ENCODE measurements at regions of chr9 and their contacts with region 1.

Region 1: GRCh38 chr9:69759421-69760277 is at the start of gene PTAR1:
- DNase-seq: peak; percentile 90
- H3K4me3 ChIP-seq: peak within 1 kb of the TSS; percentile 34 to 95 (median 91)
- H3K27ac ChIP-seq: peak within 1 kb of the TSS; percentile 64
- H3K4me1 ChIP-seq: peaks cover 15% of the 10 kb centered on the region
- H3K27me3 ChIP-seq: no peaks in the 10 kb centered on the region
- CTCF ChIP-seq: no peak
- POLR2A ChIP-seq: peak; percentile 85
- total RNA-seq, gene PTAR1: 41.5 and 46.8 TPM in 2 replicates

Region 2: DNA sequence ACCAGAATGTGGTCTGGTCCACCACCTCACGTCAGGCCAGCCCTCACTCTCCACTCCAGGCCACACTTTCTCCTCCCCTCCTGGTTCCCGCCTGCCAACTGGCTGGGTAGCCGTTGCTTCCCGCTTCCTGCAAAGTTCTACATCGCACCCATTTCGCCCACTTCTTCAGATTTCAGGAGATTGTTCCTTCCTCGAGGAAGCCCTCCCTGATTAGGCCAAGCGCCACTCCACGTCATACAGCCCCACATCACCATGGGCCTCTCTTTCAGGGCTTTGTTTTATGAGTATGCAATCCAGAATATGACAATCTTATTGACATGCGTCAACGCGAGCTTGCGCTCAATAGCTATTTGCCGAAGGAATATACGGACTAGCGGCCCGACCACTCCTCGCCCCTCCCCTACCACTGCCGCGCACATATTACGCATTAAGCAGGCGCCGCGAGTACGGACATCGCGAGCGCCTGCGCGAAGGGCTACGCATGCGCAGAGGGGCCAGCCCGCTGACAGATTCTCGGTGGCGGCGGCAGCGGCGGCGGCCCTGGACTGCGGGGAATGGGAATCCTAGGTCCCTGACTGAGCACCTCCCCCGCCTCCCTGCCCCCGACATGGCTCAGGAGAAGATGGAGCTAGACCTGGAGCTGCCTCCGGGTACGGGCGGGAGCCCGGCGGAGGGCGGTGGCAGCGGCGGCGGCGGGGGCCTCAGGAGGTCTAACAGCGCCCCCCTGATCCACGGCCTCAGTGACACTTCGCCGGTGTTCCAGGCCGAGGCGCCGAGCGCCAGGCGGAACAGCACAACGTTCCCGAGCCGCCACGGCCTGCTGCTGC is 979.9 kb before region 1 on chr9:
- CTCF ChIA-PET with region 1: no interaction called
- POLR2A ChIA-PET with region 1: no interaction called
- dilution Hi-C with region 1: no loop called
- intact Hi-C with region 1: loop called (anchors 10 kb)
- DNase-seq: peak; percentile 96
- H3K4me3 ChIP-seq: peak overlapping the region; percentile 52 to 71 (median 62)
- H3K27ac ChIP-seq: peak overlapping the region; percentile 87
- H3K4me1 ChIP-seq: peaks cover 26% of the 10 kb centered on the region
- H3K27me3 ChIP-seq: peaks cover 5% of the 10 kb centered on the region in 2 experiments
- CTCF ChIP-seq: peak; percentile 27 to 49
- POLR2A ChIP-seq: peak; percentile 54

Region 3: GRCh38 chr9:69131682-69132081 is 628.0 kb before region 1 on chr9:
- CTCF ChIA-PET with region 1: no interaction called
- POLR2A ChIA-PET with region 1: no interaction called
- dilution Hi-C with region 1: no loop called
- intact Hi-C with region 1: no loop called
- DNase-seq: peak; percentile 53
- H3K4me3 ChIP-seq: no peak overlapping the region
- H3K27ac ChIP-seq: peak overlapping the region; percentile 16
- H3K4me1 ChIP-seq: peaks cover 29% of the 10 kb centered on the region
- H3K27me3 ChIP-seq: no peaks in the 10 kb centered on the region
- CTCF ChIP-seq: no peak
- POLR2A ChIP-seq: no peak

Region 4: DNA sequence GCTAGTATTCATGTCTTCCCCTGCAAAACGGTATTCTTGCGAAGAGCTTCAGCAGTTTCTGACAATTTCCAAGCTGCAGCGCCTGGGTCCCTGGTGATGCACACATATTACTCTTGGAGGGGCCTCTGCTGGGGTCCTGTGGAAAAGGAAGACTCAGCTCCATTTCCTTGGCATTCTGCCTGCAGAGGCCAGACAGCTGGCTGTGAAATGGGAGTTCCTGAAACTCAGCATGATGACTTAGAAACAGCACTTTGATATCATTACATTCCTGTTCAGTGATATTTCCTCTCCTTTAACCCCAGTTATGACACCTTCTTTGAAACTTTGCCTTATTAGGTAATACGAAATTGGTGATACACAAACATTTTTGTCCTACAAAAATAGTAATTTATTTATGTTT is 186.0 kb before region 1 on chr9:
- CTCF ChIA-PET with region 1: no interaction called
- POLR2A ChIA-PET with region 1: no interaction called
- dilution Hi-C with region 1: no loop called
- intact Hi-C with region 1: loop called (anchors 5 kb)
- DNase-seq: peak; percentile 85
- H3K4me3 ChIP-seq: no peak overlapping the region
- H3K27ac ChIP-seq: peak overlapping the region; percentile 82
- H3K4me1 ChIP-seq: peaks cover 43% of the 10 kb centered on the region
- H3K27me3 ChIP-seq: no peaks in the 10 kb centered on the region
- CTCF ChIP-seq: no peak
- POLR2A ChIP-seq: no peak

Region 5: DNA sequence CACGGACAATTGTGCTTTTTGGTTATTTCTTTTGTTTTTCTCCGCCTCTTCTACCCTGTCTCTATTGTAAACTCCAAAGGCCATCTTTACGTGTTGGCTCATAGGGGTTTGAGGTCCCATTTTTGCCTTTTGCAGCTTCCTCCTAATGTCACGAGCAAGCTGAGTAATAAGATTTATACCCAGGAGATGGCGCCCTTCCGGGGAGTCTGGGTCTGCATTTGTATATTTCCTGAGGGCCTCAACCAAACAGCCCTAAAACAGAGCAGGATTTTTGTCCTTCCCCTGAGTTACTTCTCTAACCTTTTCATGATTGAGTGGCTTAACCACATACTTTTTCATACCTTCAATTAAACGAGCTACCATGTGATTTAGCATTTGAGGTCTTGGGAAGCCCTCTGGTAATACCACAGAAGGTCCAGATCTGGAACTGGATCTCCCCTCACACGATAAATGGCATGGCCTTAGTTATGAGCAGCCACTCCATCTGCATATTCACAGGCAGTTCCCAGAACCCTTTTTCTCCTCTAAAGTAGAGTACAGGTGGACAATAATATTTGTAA is 49.7 kb after region 1 on chr9:
- CTCF ChIA-PET with region 1: no interaction called
- POLR2A ChIA-PET with region 1: no interaction called
- dilution Hi-C with region 1: no loop called
- intact Hi-C with region 1: no loop called
- DNase-seq: peak; percentile 36
- H3K4me3 ChIP-seq: no peak overlapping the region
- H3K27ac ChIP-seq: no peak overlapping the region
- H3K4me1 ChIP-seq: no peaks in the 10 kb centered on the region
- H3K27me3 ChIP-seq: peaks cover 41 to 46% of the 10 kb centered on the region in 2 experiments
- CTCF ChIP-seq: peak; percentile 33 to 35
- POLR2A ChIP-seq: no peak

Region 6: GRCh38 chr9:69877854-69878514 is 118.3 kb after region 1 on chr9:
- CTCF ChIA-PET with region 1: no interaction called
- POLR2A ChIA-PET with region 1: no interaction called
- dilution Hi-C with region 1: no loop called
- intact Hi-C with region 1: loop called (anchors 5 kb)
- DNase-seq: peak; percentile 53
- H3K4me3 ChIP-seq: no peak overlapping the region
- H3K27ac ChIP-seq: no peak overlapping the region
- H3K4me1 ChIP-seq: peaks cover 14% of the 10 kb centered on the region
- H3K27me3 ChIP-seq: peaks cover 3 to 9% of the 10 kb centered on the region in 2 experiments
- CTCF ChIP-seq: peak; percentile 27 to 30
- POLR2A ChIP-seq: no peak

Region 7: DNA sequence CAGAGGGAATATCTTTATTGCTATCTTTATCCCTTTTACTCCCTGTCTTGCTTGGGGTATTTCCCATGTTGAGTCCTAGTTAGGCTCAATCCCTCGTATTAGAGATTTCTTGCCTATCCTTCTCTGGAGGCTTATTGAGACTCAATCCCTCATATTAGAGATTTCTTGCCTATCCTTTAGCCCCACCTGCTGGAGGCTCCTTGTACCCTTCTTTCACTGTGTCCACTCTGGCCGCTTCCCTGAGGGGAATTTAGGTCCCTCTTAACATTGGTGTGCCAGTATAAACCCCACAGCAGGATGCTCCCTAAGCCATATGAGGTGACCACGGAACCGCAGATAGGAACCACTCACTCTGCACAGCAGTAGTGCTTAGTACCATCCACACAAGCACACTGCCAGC is 173.3 kb after region 1 on chr9:
- CTCF ChIA-PET with region 1: interaction called, 3 read pairs
- POLR2A ChIA-PET with region 1: no interaction called
- dilution Hi-C with region 1: no loop called
- intact Hi-C with region 1: loop called (anchors 5 kb)
- DNase-seq: peak; percentile 44
- H3K4me3 ChIP-seq: no peak overlapping the region
- H3K27ac ChIP-seq: no peak overlapping the region
- H3K4me1 ChIP-seq: no peaks in the 10 kb centered on the region
- H3K27me3 ChIP-seq: peaks cover 4% of the 10 kb centered on the region in 2 experiments
- CTCF ChIP-seq: peak; percentile 28 to 48
- POLR2A ChIP-seq: no peak